MCF 10A (cell line): ENCODE measurements at regions of chrX and their contacts with region 1.

Region 1: GRCh38 chrX:19382555-19383145 is 38.9 kb downstream of the PDHA1 start:
- DNase-seq: peak; percentile 66
- H3K4me3 Mint-ChIP-seq: no peak overlapping the region
- H3K27ac Mint-ChIP-seq: no peak overlapping the region
- H3K4me1 Mint-ChIP-seq: no peaks in the 10 kb centered on the region
- H3K27me3 Mint-ChIP-seq: no peaks in the 10 kb centered on the region
- CTCF ChIP-seq: peak; percentile 48

Region 2: DNA sequence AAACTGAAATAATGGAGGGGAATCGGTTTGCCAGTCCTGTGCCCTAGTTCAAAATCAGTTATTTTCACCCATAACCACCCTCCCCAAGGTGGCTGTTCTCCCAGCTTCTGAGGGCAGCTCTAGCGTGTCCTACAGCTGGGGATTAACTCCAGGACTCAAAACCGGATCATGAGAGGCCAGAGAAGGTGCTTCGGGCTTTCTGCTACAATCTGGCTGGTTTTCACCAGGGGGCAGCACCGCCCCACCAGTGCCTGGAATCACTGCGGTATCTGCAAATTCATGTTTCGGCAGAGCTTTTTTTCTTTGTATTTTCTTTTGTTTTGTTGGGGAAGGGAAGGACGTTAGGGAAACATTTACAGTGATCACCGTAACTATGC is 10.5 kb before region 1 on chrX:
- CTCF ChIA-PET with region 1: interaction called, 18 read pairs
- POLR2A ChIA-PET with region 1: no interaction called
- intact Hi-C with region 1: no loop called
- DNase-seq: peak; percentile 63
- H3K4me3 Mint-ChIP-seq: peak overlapping the region; percentile 79
- H3K27ac Mint-ChIP-seq: peak overlapping the region; percentile 35
- H3K4me1 Mint-ChIP-seq: no peaks in the 10 kb centered on the region
- H3K27me3 Mint-ChIP-seq: no peaks in the 10 kb centered on the region
- CTCF ChIP-seq: peak; percentile 59